A549 (cell line): ENCODE measurements at regions of chr14 and their contacts with region 1.

Region 1: DNA sequence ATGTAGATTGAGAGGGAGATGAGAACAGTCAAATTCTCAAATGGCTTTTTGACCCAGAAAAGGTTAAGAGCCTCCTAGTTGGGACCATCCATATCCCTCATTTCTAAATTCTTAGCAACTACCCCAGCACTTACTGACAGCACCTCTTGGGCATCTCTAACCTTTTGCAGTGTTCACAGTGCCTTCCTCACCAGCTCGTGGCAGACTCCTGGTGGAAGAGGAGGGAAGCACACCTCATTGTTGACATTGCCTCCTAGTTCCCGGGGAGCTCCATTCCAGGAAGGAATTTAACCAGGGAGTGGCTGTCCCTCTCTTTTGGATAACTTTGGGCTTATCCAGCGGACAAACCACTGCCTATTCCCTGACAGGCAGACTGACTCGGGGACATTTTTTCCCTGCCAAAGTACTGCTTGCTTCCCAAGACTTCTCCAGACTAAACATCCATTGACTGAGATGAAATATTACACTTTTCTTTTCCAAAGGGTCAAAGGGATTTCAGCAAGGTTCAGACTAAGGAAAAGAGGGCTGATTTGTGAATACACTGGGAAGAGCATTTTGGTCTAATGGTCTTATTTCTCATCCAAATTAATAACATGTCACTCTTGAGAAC is 9.0 kb upstream of the OR6J1 start:
- DNase-seq: peak; percentile 78 to 83
- ATAC-seq: peak; percentile 92 to 95
- H3K4me3 ChIP-seq: no peak overlapping the region
- H3K27ac ChIP-seq: peak overlapping the region; percentile 46 to 59; a peak in 5 of 6 replicates
- H3K4me1 ChIP-seq: peaks cover 38% of the 10 kb centered on the region; the same call in 2 of the 3 replicates
- CTCF ChIP-seq: peak; percentile 82
- EP300 ChIP-seq: no peak
- POLR2A ChIP-seq: no peak
- RAD21 ChIP-seq: peak; percentile 88 to 90

Region 2: DNA sequence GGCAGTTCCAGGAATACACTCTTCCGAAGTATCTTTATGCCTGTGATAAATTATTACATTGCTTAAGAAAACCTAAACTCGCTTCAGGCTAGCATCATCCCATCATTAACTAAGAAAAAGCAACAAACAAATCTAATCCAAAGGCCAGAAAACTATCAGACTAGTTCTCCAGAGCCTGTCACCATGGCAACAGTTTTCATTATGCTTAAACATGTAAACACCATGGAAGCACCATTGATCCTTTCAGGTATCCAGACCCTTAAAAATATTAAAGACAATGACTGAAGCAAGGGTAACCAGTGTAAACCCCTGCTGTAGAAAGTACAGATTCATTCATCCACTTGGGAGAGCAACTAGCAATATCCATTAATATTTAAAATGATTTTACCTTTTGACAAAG is 73.9 kb before region 1 on chr14:
- CTCF ChIA-PET with region 1: interaction called, 376 read pairs
- POLR2A ChIA-PET with region 1: no interaction called
- DNase-seq: no peak
- ATAC-seq: no peak
- H3K4me3 ChIP-seq: no peak overlapping the region
- H3K27ac ChIP-seq: no peak overlapping the region
- H3K4me1 ChIP-seq: peaks cover 11% of the 10 kb centered on the region; the same call in 1 of the 3 replicates
- CTCF ChIP-seq: no peak
- EP300 ChIP-seq: no peak
- POLR2A ChIP-seq: no peak
- RAD21 ChIP-seq: no peak

Region 3: GRCh38 chr14:22598099-22598899 is 54.8 kb before region 1 on chr14 and contains the start of gene ABHD4:
- CTCF ChIA-PET with region 1: interaction called, 84 read pairs
- POLR2A ChIA-PET with region 1: interaction called, 8 read pairs
- DNase-seq: peak; percentile 65 to 78
- ATAC-seq: peak; percentile 92
- H3K4me3 ChIP-seq: peak within 1 kb of the TSS; percentile 84
- H3K27ac ChIP-seq: peak within 1 kb of the TSS; percentile 86 to 91
- H3K4me1 ChIP-seq: peaks cover 48% of the 10 kb centered on the region
- CTCF ChIP-seq: no peak
- EP300 ChIP-seq: no peak
- POLR2A ChIP-seq: peak; percentile 43
- RAD21 ChIP-seq: no peak
- polyA plus RNA-seq, gene ABHD4: 58.3 and 75.0 TPM in 2 replicates

Region 4: GRCh38 chr14:22678221-22678620 is 25.1 kb after region 1 on chr14:
- CTCF ChIA-PET with region 1: interaction called, 10 read pairs
- POLR2A ChIA-PET with region 1: no interaction called
- DNase-seq: no peak
- ATAC-seq: no peak
- H3K4me3 ChIP-seq: no peak overlapping the region
- H3K27ac ChIP-seq: no peak overlapping the region
- H3K4me1 ChIP-seq: no peaks in the 10 kb centered on the region
- CTCF ChIP-seq: no peak
- EP300 ChIP-seq: no peak
- POLR2A ChIP-seq: no peak
- RAD21 ChIP-seq: no peak

Region 5: GRCh38 chr14:22900081-22900799 is 247.1 kb after region 1 on chr14:
- CTCF ChIA-PET with region 1: interaction called, 12 read pairs
- POLR2A ChIA-PET with region 1: no interaction called
- DNase-seq: peak; percentile 77 to 81
- ATAC-seq: peak; percentile 81 to 83
- H3K4me3 ChIP-seq: no peak overlapping the region
- H3K27ac ChIP-seq: no peak overlapping the region; a peak in 1 of 6 replicates
- H3K4me1 ChIP-seq: peaks cover 17% of the 10 kb centered on the region
- CTCF ChIP-seq: peak; percentile 72
- EP300 ChIP-seq: no peak
- POLR2A ChIP-seq: no peak
- RAD21 ChIP-seq: peak; percentile 62 to 70